Prostate gland (tissue), 2 donors: ENCODE measurements at regions of chr1 and their contacts with region 1.

Region 1: DNA sequence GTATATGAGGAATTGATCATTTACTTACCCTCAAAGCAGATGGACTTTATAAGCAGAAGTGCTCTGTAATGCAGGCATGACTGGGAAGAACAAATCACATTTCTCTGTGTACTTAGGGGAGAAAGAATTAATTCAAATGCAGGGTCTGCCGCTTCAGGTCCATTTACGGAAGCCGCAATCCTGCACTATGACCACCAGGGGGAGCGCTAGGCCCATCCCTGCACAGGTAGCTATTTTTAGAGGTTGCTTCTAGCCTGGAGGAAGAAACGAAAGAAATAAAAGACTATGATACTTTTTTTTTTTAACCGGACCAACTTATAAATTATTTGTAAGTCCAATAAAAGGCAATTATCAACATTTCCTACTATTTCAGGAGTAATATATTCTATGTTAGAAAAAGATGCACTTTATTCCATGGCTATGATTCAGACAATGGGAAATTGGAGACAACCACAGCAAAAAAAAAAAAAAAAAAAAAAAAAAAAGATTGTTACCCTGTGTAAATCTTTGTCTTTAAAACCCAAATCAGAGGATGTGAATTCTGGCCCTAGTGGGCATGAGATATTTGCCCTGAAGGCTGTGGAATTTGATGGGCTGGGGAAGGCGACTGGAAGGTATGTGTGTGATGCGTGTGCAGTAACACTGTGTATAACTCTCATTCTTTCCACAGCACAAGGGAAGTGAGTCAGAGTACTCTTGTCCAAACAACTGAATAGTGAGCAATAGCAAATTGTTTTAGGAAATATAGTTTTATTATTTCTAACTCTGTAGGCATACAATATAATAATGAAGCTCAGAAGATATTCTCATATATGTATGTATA is 12.9 kb upstream of the FYB2 start:
- DNase-seq: peak; percentile 44
- H3K4me3 ChIP-seq: no peak overlapping the region
- H3K27ac ChIP-seq: no peak overlapping the region
- H3K4me1 ChIP-seq: no peaks in the 10 kb centered on the region
- H3K27me3 ChIP-seq: no peaks in the 10 kb centered on the region
- CTCF ChIP-seq: peak; percentile 88 to 92 (median 89)
- POLR2A ChIP-seq: no peak

Region 2: DNA sequence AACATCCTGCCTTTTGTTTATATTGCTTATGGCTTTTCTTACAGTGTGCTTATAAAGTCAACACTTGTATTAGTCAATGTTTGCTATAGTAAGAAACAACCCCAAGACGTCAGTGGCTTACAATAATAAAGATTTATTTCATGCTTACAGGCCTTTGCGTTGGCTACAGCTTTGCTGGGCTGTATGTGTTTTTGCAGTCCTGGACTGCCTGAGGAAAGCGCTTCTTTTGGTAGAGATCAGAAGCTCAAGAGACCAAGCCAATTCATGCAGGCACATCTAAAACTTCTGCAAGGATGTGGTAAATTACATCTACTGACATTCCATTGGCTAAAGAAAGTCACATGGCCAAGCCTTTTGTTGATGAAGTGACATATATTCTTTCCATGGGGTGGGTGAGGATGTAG is 204.4 kb before region 1 on chr1:
- intact Hi-C with region 1: no loop called
- DNase-seq: no peak
- H3K4me3 ChIP-seq: no peak overlapping the region
- H3K27ac ChIP-seq: no peak overlapping the region
- H3K4me1 ChIP-seq: no peaks in the 10 kb centered on the region
- H3K27me3 ChIP-seq: no peaks in the 10 kb centered on the region
- CTCF ChIP-seq: no peak
- POLR2A ChIP-seq: no peak

Region 3: DNA sequence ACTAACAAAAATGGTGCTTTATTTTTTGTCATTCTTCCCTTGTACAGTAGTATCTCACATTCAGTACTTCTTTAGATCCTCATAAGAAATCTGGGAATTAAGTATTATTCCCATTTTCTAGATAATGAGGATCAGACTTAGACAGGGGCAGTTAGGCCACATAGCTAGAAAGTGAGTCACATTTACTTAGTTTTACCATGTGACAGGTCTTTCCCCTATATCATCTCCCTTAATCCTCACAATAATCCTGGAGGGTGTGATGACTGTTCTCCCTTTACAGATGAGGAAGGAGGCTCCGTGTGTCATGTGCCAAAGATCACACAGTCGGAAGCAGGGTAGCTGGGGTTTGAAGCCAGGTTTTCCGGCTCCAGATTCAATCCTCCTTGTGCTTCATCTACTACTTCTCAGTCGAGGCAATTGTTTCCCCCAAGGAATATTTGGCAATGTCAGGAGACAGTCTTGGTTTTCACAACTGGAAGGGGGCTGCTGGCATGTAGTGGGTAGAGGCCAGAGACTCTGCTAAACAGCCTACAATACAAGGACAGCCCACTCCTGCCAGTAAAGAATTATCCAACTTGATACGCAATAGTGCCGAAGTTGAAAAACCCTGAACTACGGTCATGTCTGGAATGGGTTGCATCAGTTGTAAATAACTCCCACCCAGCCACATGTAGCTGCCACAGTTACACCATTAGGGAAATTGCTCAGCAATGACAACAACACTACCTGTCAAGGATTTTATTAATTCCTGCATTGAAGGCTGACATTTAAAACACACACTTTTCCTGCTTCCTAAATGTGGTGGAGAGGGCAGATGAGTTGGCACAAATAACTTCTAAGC is 79.2 kb after region 1 on chr1:
- intact Hi-C with region 1: no loop called
- DNase-seq: no peak
- H3K4me3 ChIP-seq: no peak overlapping the region
- H3K27ac ChIP-seq: no peak overlapping the region
- H3K4me1 ChIP-seq: no peaks in the 10 kb centered on the region
- H3K27me3 ChIP-seq: no peaks in the 10 kb centered on the region
- CTCF ChIP-seq: no peak
- POLR2A ChIP-seq: no peak

Region 4: DNA sequence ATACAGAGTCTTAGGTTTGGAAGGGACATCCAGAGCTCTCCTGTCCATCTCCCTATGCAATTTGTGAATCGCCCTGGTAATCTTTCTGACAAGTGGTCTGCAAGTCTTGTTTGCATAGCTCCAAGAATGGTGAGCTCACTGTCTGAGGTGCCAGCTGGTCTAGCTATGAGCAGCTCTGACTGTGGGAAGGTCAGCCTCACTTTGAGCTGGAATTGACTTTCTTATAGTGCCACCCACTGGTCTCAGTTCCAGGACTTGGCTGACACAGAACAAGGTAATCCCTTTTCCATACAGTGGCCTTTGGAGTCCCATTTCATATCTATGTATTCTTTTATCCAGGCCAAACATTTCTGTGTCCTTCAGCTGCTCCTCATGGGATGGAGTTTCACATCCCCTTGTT is 229.3 kb after region 1 on chr1:
- intact Hi-C with region 1: loop called (anchors 10 kb)
- DNase-seq: no peak
- H3K4me3 ChIP-seq: no peak overlapping the region
- H3K27ac ChIP-seq: no peak overlapping the region
- H3K4me1 ChIP-seq: no peaks in the 10 kb centered on the region
- H3K27me3 ChIP-seq: no peaks in the 10 kb centered on the region
- CTCF ChIP-seq: no peak
- POLR2A ChIP-seq: no peak

Region 5: DNA sequence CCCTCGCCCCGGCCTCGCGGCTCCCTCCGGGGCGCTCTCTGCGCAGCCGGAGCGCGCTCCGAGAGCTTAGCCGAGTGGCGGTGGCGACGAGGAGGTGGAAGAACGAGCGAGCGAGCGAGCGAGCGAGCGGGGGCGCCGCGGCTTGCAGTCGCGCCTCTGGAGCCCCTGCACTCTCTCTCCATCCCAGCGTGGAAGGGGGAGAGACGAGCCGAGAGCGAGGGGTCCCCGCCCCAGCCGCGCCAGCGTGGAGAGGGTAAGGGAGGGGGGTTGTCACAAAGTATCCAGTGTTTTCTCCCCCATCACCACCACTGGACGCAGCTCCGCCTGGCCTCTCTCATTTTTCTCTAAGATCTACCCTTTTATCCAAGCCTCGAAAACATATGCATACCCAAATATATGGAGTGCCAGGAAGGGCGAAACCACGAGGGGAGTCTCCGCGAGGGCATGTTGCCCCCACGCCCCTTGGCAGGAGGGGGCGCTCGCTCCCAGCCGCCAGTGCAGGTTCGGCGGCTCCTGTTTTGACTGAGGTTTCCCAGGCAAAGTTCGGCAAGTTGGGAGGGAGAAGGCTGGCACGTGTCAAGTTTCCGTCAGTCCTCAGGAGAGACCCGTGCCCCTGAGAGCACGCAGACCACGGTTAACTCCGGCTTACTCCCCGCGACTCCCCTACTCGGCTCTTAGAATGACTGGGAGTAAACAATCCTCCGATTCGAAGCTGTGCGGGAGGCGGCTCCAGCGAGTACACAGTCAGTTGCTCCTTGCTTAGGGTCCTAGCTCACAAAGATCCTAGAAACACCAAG is 592.3 kb after region 1 on chr1:
- intact Hi-C with region 1: loop called (anchors 10 kb)
- DNase-seq: peak; percentile 5
- H3K4me3 ChIP-seq: peak overlapping the region; percentile 20 to 29
- H3K27ac ChIP-seq: no peak overlapping the region
- H3K4me1 ChIP-seq: no peaks in the 10 kb centered on the region
- H3K27me3 ChIP-seq: peaks cover 20% of the 10 kb centered on the region
- CTCF ChIP-seq: peak in 3 of 4 experiments; percentile 15 to 47 (median 39)
- POLR2A ChIP-seq: no peak

Region 6: DNA sequence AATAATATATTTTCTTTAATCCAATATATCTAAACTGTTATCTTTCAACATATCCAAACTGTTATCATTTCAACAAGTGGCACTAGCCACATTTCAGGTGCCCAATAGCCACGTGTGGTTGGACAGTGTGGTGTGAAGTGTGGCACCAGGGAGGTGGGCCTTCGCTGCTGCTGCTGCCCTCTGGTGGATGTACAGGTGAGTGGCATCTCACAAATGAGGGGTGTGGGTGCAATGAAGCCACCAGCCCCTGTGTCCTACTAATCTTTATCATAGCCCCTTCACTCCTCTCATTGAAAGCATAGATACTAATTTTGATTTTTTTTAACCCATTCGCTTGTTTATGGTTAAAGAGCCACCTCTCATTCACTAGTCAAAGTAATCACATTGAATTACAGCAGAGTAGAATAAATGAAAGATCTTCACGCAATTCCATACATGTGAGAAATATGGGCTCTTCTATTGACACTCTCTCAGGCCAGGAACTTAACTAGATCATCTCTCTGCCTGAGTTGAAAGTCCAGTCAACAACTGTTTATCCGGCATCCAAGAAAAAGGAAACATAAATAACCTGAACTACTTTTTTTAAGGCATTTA is 1215.3 kb after region 1 on chr1:
- intact Hi-C with region 1: loop called (anchors 5 kb)
- DNase-seq: no peak
- H3K4me3 ChIP-seq: no peak overlapping the region
- H3K27ac ChIP-seq: no peak overlapping the region
- H3K4me1 ChIP-seq: no peaks in the 10 kb centered on the region
- H3K27me3 ChIP-seq: no peaks in the 10 kb centered on the region
- CTCF ChIP-seq: peak in 3 of 4 experiments; percentile 47 to 56 (median 49)
- POLR2A ChIP-seq: no peak

Region 7: GRCh38 chr1:58162952-58163550 is 1331.0 kb after region 1 on chr1:
- intact Hi-C with region 1: loop called (anchors 5 kb)
- DNase-seq: peak; percentile 48
- H3K4me3 ChIP-seq: no peak overlapping the region
- H3K27ac ChIP-seq: no peak overlapping the region
- H3K4me1 ChIP-seq: no peaks in the 10 kb centered on the region
- H3K27me3 ChIP-seq: no peaks in the 10 kb centered on the region
- CTCF ChIP-seq: peak; percentile 45 to 72 (median 68)
- POLR2A ChIP-seq: no peak

Region 8: DNA sequence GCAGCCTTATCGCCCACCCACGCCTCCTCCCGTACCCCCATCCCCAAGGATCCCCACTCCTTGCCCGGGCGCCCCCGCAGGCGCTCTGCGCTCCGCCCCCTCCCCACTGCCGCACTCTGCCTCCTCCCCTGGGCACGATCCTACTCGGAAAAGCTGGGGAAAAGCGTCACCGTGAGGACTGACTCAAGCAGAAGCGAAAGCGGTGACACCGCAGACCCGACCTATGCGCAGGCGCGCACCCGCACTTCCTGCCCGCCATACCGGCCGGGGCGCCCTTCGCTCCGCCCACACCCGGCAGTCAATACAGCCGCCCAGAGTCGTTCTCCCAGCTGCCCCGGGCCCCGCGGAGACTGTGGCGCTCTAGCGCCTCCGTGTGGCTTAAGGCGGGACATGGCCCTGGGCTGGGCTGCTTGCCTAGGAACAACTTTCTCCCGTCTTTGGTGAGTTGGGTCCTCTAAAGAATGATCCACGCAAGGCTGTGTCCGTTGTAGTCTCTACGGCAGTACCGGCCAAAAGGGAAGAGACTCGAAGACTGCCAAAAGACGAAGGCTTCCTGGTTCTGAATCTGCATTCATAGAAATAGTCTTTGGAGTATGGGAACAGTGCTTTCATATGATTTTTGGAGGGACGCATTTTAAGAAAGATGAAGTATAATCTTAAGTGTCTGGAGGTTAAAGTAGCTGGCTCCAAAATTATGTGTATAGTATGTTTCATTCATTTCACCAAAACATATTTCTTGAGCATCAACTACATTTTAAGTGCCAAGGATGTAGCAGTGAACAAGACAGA is 1714.6 kb after region 1 on chr1 and contains the start of gene OMA1:
- intact Hi-C with region 1: loop called (anchors 5 kb)
- DNase-seq: peak; percentile 94
- H3K4me3 ChIP-seq: peak within 1 kb of the TSS; percentile 74 to 81
- H3K27ac ChIP-seq: peak within 1 kb of the TSS; percentile 100
- H3K4me1 ChIP-seq: no peaks in the 10 kb centered on the region
- H3K27me3 ChIP-seq: no peaks in the 10 kb centered on the region
- CTCF ChIP-seq: peak; percentile 95 to 99 (median 98)
- POLR2A ChIP-seq: peak; percentile 89
- total RNA-seq, gene OMA1: 26.4 to 46.6 TPM